Mammary epithelial cell (primary cell): ENCODE measurements at regions of chr19 and their contacts with region 1.

Region 1: DNA sequence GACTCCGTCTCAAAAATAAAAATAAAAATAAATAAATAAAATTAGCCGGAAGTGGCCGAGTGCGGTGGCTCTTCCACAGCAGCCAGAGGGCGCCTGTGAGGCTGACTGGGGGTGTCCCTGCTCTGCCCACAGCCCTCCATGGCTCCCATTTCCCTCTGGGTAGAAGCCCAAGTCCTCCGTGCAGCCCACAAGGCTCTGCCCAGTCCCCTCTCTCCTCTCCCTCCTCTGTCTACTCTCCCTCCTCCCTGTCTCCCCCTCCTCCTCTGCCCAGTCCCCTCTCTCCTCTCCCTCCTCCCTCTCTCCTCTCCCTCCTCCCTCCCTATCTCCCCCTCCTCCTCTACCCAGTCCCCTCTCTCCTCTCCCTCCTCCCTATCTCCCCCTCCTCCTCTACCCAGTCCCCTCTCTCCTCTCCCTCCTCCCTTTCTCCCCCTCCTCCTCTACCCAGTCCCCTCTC is 20.4 kb downstream of the MISP start:
- DNase-seq: peak; percentile 28
- H3K4me3 ChIP-seq: no peak overlapping the region
- H3K27ac ChIP-seq: no peak overlapping the region
- H3K4me1 ChIP-seq: no peaks in the 10 kb centered on the region
- H3K27me3 ChIP-seq: no peaks in the 10 kb centered on the region
- CTCF ChIP-seq: peak; percentile 47 to 66

Region 2: GRCh38 chr19:796692-797527 is 25.6 kb after region 1 on chr19 and contains the start of gene PTBP1:
- CTCF ChIA-PET with region 1: no interaction called
- dilution Hi-C with region 1: no loop called
- in situ Hi-C with region 1: no loop called
- intact Hi-C with region 1: loop called (anchors 1 kb)
- DNase-seq: peak; percentile 100
- H3K4me3 ChIP-seq: peak within 1 kb of the TSS; percentile 82 to 97 (median 92)
- H3K27ac ChIP-seq: peak within 1 kb of the TSS; percentile 68
- H3K4me1 ChIP-seq: peaks cover 26% of the 10 kb centered on the region
- H3K27me3 ChIP-seq: no peaks in the 10 kb centered on the region
- CTCF ChIP-seq: no peak
- total RNA-seq, gene PTBP1: 88.9 to 383 TPM

Region 3: GRCh38 chr19:843180-843835 is 71.9 kb after region 1 on chr19:
- CTCF ChIA-PET with region 1: no interaction called
- dilution Hi-C with region 1: no loop called
- in situ Hi-C with region 1: no loop called
- intact Hi-C with region 1: no loop called
- DNase-seq: no peak
- H3K4me3 ChIP-seq: peak overlapping the region in 1 of 3 experiments; percentile 23
- H3K27ac ChIP-seq: no peak overlapping the region
- H3K4me1 ChIP-seq: peaks cover 14% of the 10 kb centered on the region
- H3K27me3 ChIP-seq: peaks cover 9% of the 10 kb centered on the region
- CTCF ChIP-seq: peak in 1 of 2 donors; percentile 7

Region 4: GRCh38 chr19:860481-861101 is 89.2 kb after region 1 on chr19:
- CTCF ChIA-PET with region 1: interaction called, 3 read pairs
- dilution Hi-C with region 1: no loop called
- in situ Hi-C with region 1: loop called in 1 of 2 experiments (anchors 10 kb)
- intact Hi-C with region 1: loop called (anchors 1 kb)
- DNase-seq: peak; percentile 61
- H3K4me3 ChIP-seq: peak overlapping the region in 1 of 3 experiments; percentile 20
- H3K27ac ChIP-seq: no peak overlapping the region
- H3K4me1 ChIP-seq: peaks cover 4% of the 10 kb centered on the region
- H3K27me3 ChIP-seq: no peaks in the 10 kb centered on the region
- CTCF ChIP-seq: no peak

Region 5: GRCh38 chr19:925526-926322 is 154.4 kb after region 1 on chr19 and contains the start of gene ARID3A:
- CTCF ChIA-PET with region 1: no interaction called
- dilution Hi-C with region 1: no loop called
- in situ Hi-C with region 1: loop called (anchors 5 to 10 kb)
- intact Hi-C with region 1: loop called (anchors 1 kb)
- DNase-seq: peak; percentile 82
- H3K4me3 ChIP-seq: peak within 1 kb of the TSS; percentile 72 to 98 (median 82)
- H3K27ac ChIP-seq: peak within 1 kb of the TSS; percentile 45
- H3K4me1 ChIP-seq: peaks cover 7% of the 10 kb centered on the region
- H3K27me3 ChIP-seq: no peaks in the 10 kb centered on the region
- CTCF ChIP-seq: no peak
- total RNA-seq, gene ARID3A: 8.2 to 17.4 TPM

Region 6: GRCh38 chr19:1001538-1002166 is 230.3 kb after region 1 on chr19:
- CTCF ChIA-PET with region 1: no interaction called
- dilution Hi-C with region 1: no loop called
- in situ Hi-C with region 1: no loop called
- intact Hi-C with region 1: loop called (anchors 1 kb)
- DNase-seq: no peak
- H3K4me3 ChIP-seq: no peak overlapping the region
- H3K27ac ChIP-seq: no peak overlapping the region
- H3K4me1 ChIP-seq: peaks cover 5% of the 10 kb centered on the region
- H3K27me3 ChIP-seq: peaks cover 2% of the 10 kb centered on the region
- CTCF ChIP-seq: peak; percentile 55 to 87